HepG2 (cell line): ENCODE measurements at regions of chr5 and their contacts with region 1.

Region 1: DNA sequence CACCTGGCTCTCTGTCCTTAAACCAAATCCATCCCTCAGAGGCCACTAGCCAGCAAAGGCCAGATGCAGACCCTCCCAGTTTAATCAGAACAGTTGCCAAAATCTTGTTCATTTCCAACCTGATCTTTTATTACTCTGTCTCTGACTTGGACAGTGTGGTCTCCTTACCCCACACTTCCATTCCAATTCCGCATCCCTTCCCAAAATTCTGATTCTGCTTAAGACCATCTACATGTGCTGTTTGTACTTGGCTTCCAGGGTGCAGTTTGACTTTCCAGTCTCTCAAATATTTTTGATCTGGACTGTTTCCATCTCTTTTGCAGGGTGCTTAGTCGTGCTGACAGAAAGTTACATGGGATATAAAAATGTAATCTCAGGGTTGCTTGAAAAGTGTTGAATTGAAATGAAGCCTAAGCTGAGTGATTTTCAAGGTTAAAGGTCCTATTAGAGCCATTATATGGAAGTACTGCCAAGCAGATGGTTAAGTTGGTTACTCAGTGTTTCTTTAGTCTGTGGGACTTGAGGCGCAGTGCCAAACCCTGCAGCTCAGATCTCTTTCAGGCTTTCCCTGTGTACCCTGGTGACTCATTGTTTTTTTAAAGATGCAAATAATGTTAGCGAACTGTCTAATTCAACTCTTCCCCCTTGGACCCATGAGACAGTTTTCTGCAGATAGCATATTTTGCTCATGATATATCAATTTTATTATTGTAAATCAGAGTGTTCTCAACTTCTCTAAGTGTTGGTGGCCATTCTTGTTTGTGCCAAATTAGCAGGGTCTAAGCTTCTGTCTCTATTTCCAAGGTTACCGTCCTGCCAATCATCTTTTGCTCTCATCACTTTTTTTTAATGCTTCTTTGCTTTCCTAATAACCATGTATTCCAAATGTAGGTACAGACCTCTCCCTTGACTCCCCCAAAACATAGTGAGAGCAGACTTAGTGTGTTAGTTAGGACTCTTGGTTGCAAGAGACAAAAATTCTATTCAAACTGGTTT is 18.2 kb upstream of the DCP2 start:
- DNase-seq: peak; percentile 65
- ATAC-seq: peak; percentile 73
- H3K4me3 ChIP-seq: no peak overlapping the region
- H3K27ac ChIP-seq: no peak overlapping the region
- H3K4me1 ChIP-seq: peaks cover 61% of the 10 kb centered on the region
- H3K27me3 ChIP-seq: no peaks in the 10 kb centered on the region
- CTCF ChIP-seq: no peak
- EP300 ChIP-seq: 0 out of 4 replicates have a peak, but pooled peaks of 1 of the 2 experiments have one; percentile 8
- POLR2A ChIP-seq: no peak
- RAD21 ChIP-seq: no peak

Region 2: GRCh38 chr5:112366987-112367386 is 591.4 kb before region 1 on chr5:
- CTCF ChIA-PET with region 1: no interaction called
- POLR2A ChIA-PET with region 1: no interaction called
- in situ Hi-C with region 1: no loop called
- intact Hi-C with region 1: no loop called
- DNase-seq: peak; percentile 20
- ATAC-seq: peak; percentile 99
- H3K4me3 ChIP-seq: no peak overlapping the region
- H3K27ac ChIP-seq: no peak overlapping the region
- H3K4me1 ChIP-seq: no peaks in the 10 kb centered on the region
- H3K27me3 ChIP-seq: no peaks in the 10 kb centered on the region; a peak in 1 of 5 replicates
- CTCF ChIP-seq: peak; percentile 30; the same call in 1 of the 2 replicates
- EP300 ChIP-seq: no peak
- POLR2A ChIP-seq: no peak
- RAD21 ChIP-seq: no peak

Region 3: DNA sequence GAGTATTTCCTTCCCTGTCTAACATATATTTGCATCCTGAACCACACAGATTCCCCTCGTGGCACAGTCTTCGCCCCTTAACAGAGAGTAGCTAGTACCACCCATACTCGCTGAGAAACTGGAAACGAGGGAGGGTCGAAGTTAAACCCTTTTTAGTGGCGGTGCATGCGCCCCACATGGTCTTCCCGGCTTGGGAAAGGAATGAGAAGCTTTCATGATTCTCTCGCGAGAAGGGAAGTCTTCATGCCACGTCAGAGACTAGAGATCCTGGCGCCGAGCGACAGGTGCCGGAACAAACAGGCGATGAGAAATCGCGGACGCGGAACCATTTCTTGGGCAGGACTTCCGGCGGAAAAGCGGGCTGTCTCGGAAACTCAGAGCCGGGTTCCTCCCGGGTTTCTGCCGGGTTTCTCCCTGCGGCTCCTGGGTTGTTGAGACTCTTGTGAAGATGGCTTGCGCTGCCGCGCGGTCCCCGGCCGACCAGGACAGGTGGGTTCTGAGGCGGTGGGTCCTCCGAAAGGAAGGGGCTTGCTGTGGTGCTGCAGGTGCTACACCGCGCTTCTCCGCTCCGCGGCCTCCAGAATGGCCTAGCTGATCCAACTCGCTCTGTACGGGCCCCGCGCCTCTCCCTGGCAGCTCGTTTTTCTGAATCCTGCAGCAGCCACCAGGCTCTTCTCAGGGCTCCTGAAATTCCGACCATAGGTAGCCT is 97.3 kb before region 1 on chr5 and contains the start of gene SRP19:
- CTCF ChIA-PET with region 1: no interaction called
- POLR2A ChIA-PET with region 1: interaction called, 3 read pairs
- in situ Hi-C with region 1: no loop called
- intact Hi-C with region 1: loop called (anchors 5 kb)
- DNase-seq: peak; percentile 97
- ATAC-seq: peak; percentile 96
- H3K4me3 ChIP-seq: peak within 1 kb of the TSS; percentile 85 to 100 (median 93)
- H3K27ac ChIP-seq: peak within 1 kb of the TSS; percentile 89
- H3K4me1 ChIP-seq: peaks cover 32% of the 10 kb centered on the region
- H3K27me3 ChIP-seq: no peaks in the 10 kb centered on the region; a peak in 1 of 5 replicates
- CTCF ChIP-seq: no peak
- EP300 ChIP-seq: 0 out of 4 replicates have a peak, but pooled peaks of 1 of the 2 experiments have one; percentile 13
- POLR2A ChIP-seq: peak; percentile 68 to 80; a peak in 3 of 4 replicates
- RAD21 ChIP-seq: peak; percentile 25; the same call in 1 of the 2 replicates
- total RNA-seq, gene SRP19: 143 and 214 TPM in 2 replicates

Region 4: GRCh38 chr5:112968411-112969106 is 10.2 kb after region 1 on chr5:
- CTCF ChIA-PET with region 1: no interaction called
- POLR2A ChIA-PET with region 1: interaction called, 11 read pairs
- in situ Hi-C with region 1: no loop called
- intact Hi-C with region 1: no loop called
- DNase-seq: peak; percentile 93
- ATAC-seq: peak; percentile 92
- H3K4me3 ChIP-seq: peak overlapping the region in 2 of 3 experiments; percentile 1 to 47; a peak in 2 of 6 replicates
- H3K27ac ChIP-seq: peak overlapping the region; percentile 69
- H3K4me1 ChIP-seq: peaks cover 52% of the 10 kb centered on the region
- H3K27me3 ChIP-seq: no peaks in the 10 kb centered on the region
- CTCF ChIP-seq: no peak
- EP300 ChIP-seq: peak in 1 of 2 experiments; percentile 88; a peak in 2 of 4 replicates
- POLR2A ChIP-seq: no peak
- RAD21 ChIP-seq: no peak

Region 5: DNA sequence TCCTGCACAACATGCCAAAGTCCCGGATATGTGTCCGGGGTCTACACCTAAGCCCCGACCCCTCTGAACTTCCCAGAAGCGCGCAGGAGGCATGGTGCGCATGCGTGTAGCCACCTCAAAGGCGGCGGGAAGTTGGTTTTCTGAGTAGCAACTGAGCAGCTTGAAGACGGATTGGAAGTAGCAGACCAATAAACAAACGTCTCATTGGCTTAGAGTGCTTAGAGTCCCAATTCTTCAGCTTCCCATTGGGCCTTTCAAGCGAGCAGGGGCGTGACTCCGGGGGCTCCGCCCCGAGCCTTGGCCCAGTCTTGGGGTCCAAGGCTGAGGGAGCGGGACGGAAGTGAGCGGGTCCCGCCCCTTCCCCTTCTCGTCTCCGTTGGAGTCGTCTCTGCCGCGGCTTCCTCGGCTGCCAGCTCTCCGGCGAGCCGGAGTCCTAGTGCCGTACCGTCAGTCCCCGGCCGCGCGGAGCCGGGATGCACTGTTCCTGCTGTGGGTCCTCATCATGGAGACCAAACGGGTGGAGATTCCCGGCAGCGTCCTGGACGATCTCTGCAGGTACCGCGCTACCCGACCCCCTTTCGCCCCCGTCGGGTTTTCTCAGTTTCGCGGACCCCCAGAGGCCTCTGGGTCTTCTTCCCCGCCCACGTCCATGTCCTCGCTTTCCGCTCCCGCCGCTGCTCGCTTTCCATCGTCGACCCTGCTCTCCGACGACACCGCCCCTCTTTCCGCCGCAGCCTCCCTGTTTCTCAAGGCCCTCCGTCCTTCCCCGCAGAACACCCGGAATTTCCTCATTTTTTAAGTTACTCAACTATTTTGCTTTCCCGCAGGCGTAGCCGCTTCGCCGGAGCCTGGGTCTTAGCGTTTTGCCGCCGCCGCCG is 18.3 kb after region 1 on chr5 and contains the start of gene DCP2:
- CTCF ChIA-PET with region 1: no interaction called
- POLR2A ChIA-PET with region 1: interaction called, 24 read pairs
- in situ Hi-C with region 1: no loop called
- intact Hi-C with region 1: no loop called
- DNase-seq: peak; percentile 99
- ATAC-seq: peak; percentile 97
- H3K4me3 ChIP-seq: peak within 1 kb of the TSS; percentile 87 to 93 (median 88)
- H3K27ac ChIP-seq: peak within 1 kb of the TSS; percentile 86
- H3K4me1 ChIP-seq: peaks cover 42% of the 10 kb centered on the region
- H3K27me3 ChIP-seq: no peaks in the 10 kb centered on the region; a peak in 1 of 5 replicates
- CTCF ChIP-seq: no peak
- EP300 ChIP-seq: 0 out of 4 replicates have a peak, but pooled peaks of 1 of the 2 experiments have one; percentile 21
- POLR2A ChIP-seq: peak; percentile 86 to 89
- RAD21 ChIP-seq: no peak
- total RNA-seq, gene DCP2: 63.4 and 113 TPM in 2 replicates